CD8-positive, alpha-beta T cell (primary cell): ENCODE measurements at regions of chr1 and their contacts with region 1.

Region 1: GRCh38 chr1:180178511-180179161 is 24.0 kb downstream of the QSOX1 start:
- DNase-seq: peak; percentile 42 to 82 (median 66)
- ATAC-seq: peak; percentile 87
- H3K4me3 ChIP-seq: no peak overlapping the region
- H3K4me3 Mint-ChIP-seq: no peak overlapping the region
- H3K27ac ChIP-seq: no peak overlapping the region
- H3K27ac Mint-ChIP-seq: no peak overlapping the region
- H3K4me1 ChIP-seq: no peaks in the 10 kb centered on the region
- H3K4me1 Mint-ChIP-seq: no peaks in the 10 kb centered on the region
- H3K27me3 ChIP-seq: no peaks in the 10 kb centered on the region
- H3K27me3 Mint-ChIP-seq: no peaks in the 10 kb centered on the region
- CTCF ChIP-seq: peak; percentile 85

Region 2: DNA sequence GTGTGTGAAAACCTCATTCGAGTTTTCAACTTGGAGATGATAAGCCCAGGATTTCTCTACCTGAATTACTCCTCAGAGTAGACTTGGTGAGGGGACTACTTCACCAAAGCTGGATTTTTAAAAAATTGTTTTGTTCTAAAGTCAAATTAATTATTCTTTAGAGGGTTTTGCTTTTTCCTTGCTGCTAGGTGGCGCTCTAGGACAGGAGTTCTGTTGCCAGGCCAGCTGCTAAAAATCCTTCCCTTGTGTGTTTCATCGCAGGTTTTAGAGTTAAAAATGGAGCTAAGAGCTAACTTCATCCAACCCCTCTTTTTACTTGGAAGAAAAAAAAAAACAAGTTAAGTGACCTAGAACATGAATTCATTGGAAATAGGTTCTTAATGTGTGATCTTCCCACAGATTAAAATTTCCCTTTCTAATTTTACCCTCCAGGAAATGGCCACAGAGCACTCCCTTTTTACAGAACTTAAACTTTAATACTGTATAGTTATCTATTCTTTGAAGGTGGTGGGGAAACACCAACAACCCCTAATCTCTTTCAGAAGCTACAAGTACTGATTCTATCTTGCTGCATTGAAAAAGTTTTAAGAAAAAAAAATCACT is 472.2 kb before region 1 on chr1:
- CTCF ChIA-PET with region 1: interaction called, 21 read pairs
- POLR2A ChIA-PET with region 1: no interaction called
- intact Hi-C with region 1: loop called in 1 of 2 experiments (anchors 2 kb)
- DNase-seq: peak; percentile 23 to 76 (median 58)
- ATAC-seq: peak; percentile 32
- H3K4me3 ChIP-seq: no peak overlapping the region
- H3K4me3 Mint-ChIP-seq: no peak overlapping the region
- H3K27ac ChIP-seq: no peak overlapping the region
- H3K27ac Mint-ChIP-seq: no peak overlapping the region
- H3K4me1 ChIP-seq: peaks cover 6% of the 10 kb centered on the region
- H3K4me1 Mint-ChIP-seq: peaks cover 7% of the 10 kb centered on the region
- H3K27me3 ChIP-seq: no peaks in the 10 kb centered on the region
- H3K27me3 Mint-ChIP-seq: peaks cover 4% of the 10 kb centered on the region
- CTCF ChIP-seq: peak; percentile 65

Region 3: GRCh38 chr1:179867807-179868330 is 310.8 kb before region 1 on chr1:
- CTCF ChIA-PET with region 1: interaction called, 65 read pairs
- POLR2A ChIA-PET with region 1: no interaction called
- intact Hi-C with region 1: loop called (anchors 1 kb)
- DNase-seq: peak; percentile 14 to 70 (median 58)
- ATAC-seq: peak; percentile 92
- H3K4me3 ChIP-seq: no peak overlapping the region
- H3K4me3 Mint-ChIP-seq: no peak overlapping the region
- H3K27ac ChIP-seq: peak overlapping the region in 1 of 2 experiments; percentile 14
- H3K27ac Mint-ChIP-seq: peak overlapping the region; percentile 2
- H3K4me1 ChIP-seq: no peaks in the 10 kb centered on the region
- H3K4me1 Mint-ChIP-seq: peaks cover 24% of the 10 kb centered on the region
- H3K27me3 ChIP-seq: no peaks in the 10 kb centered on the region
- H3K27me3 Mint-ChIP-seq: no peaks in the 10 kb centered on the region
- CTCF ChIP-seq: peak; percentile 69

Region 4: GRCh38 chr1:180080433-180080832 is 98.2 kb before region 1 on chr1:
- CTCF ChIA-PET with region 1: interaction called, 13 read pairs
- POLR2A ChIA-PET with region 1: no interaction called
- intact Hi-C with region 1: loop called in 1 of 2 experiments (anchors 5 kb)
- DNase-seq: no peak
- ATAC-seq: no peak
- H3K4me3 ChIP-seq: no peak overlapping the region
- H3K4me3 Mint-ChIP-seq: no peak overlapping the region
- H3K27ac ChIP-seq: no peak overlapping the region
- H3K27ac Mint-ChIP-seq: no peak overlapping the region
- H3K4me1 ChIP-seq: no peaks in the 10 kb centered on the region
- H3K4me1 Mint-ChIP-seq: no peaks in the 10 kb centered on the region
- H3K27me3 ChIP-seq: no peaks in the 10 kb centered on the region
- H3K27me3 Mint-ChIP-seq: no peaks in the 10 kb centered on the region
- CTCF ChIP-seq: no peak

Region 5: GRCh38 chr1:180112984-180113647 is 65.5 kb before region 1 on chr1:
- CTCF ChIA-PET with region 1: interaction called, 6 read pairs
- POLR2A ChIA-PET with region 1: no interaction called
- intact Hi-C with region 1: loop called in 1 of 2 experiments (anchors 5 kb)
- DNase-seq: no peak
- ATAC-seq: no peak
- H3K4me3 ChIP-seq: no peak overlapping the region
- H3K4me3 Mint-ChIP-seq: no peak overlapping the region
- H3K27ac ChIP-seq: no peak overlapping the region
- H3K27ac Mint-ChIP-seq: no peak overlapping the region
- H3K4me1 ChIP-seq: peaks cover 3% of the 10 kb centered on the region
- H3K4me1 Mint-ChIP-seq: peaks cover 3% of the 10 kb centered on the region
- H3K27me3 ChIP-seq: no peaks in the 10 kb centered on the region
- H3K27me3 Mint-ChIP-seq: no peaks in the 10 kb centered on the region
- CTCF ChIP-seq: no peak

Region 6: GRCh38 chr1:180229152-180229973 is 50.7 kb after region 1 on chr1:
- CTCF ChIA-PET with region 1: no interaction called
- POLR2A ChIA-PET with region 1: no interaction called
- intact Hi-C with region 1: no loop called
- DNase-seq: peak in 2 of 9 experiments; percentile 42 to 51
- ATAC-seq: peak; percentile 23
- H3K4me3 ChIP-seq: peak overlapping the region; percentile 43 to 50
- H3K4me3 Mint-ChIP-seq: peak overlapping the region; percentile 78
- H3K27ac ChIP-seq: no peak overlapping the region
- H3K27ac Mint-ChIP-seq: no peak overlapping the region
- H3K4me1 ChIP-seq: peaks cover 18% of the 10 kb centered on the region
- H3K4me1 Mint-ChIP-seq: peaks cover 24% of the 10 kb centered on the region
- H3K27me3 ChIP-seq: peaks cover 41 to 54% of the 10 kb centered on the region in 2 experiments
- H3K27me3 Mint-ChIP-seq: peaks cover 64% of the 10 kb centered on the region
- CTCF ChIP-seq: no peak

Region 7: GRCh38 chr1:180269761-180270527 is 91.3 kb after region 1 on chr1:
- CTCF ChIA-PET with region 1: no interaction called
- POLR2A ChIA-PET with region 1: no interaction called
- intact Hi-C with region 1: no loop called
- DNase-seq: peak in 2 of 9 experiments; percentile 8 to 40
- ATAC-seq: no peak
- H3K4me3 ChIP-seq: no peak overlapping the region
- H3K4me3 Mint-ChIP-seq: no peak overlapping the region
- H3K27ac ChIP-seq: no peak overlapping the region
- H3K27ac Mint-ChIP-seq: no peak overlapping the region
- H3K4me1 ChIP-seq: no peaks in the 10 kb centered on the region
- H3K4me1 Mint-ChIP-seq: no peaks in the 10 kb centered on the region
- H3K27me3 ChIP-seq: no peaks in the 10 kb centered on the region
- H3K27me3 Mint-ChIP-seq: no peaks in the 10 kb centered on the region
- CTCF ChIP-seq: no peak